ENCODE measurements at regions of chr9 and their contacts with region 1.

Region 1: GRCh38 chr9:31958572-31958971 is 425.9 kb upstream of the ACO1 start:
- DNase-seq: no peak
- ATAC-seq: no peak
- H3K4me3 ChIP-seq: no peak overlapping the region
- H3K27ac ChIP-seq: no peak overlapping the region
- H3K4me1 ChIP-seq: no peaks in the 10 kb centered on the region
- H3K27me3 ChIP-seq: no peaks in the 10 kb centered on the region
- CTCF ChIP-seq: no peak
- POLR2A ChIP-seq: no peak
- RAD21 ChIP-seq: no peak

Region 2: GRCh38 chr9:30519756-30520155 is 1438.8 kb before region 1 on chr9:
- CTCF ChIA-PET with region 1: no interaction called
- POLR2A ChIA-PET with region 1: no interaction called
- dilution Hi-C with region 1: no loop called
- in situ Hi-C with region 1: no loop called
- intact Hi-C with region 1: no loop called
- DNase-seq: no peak
- ATAC-seq: no peak
- H3K4me3 ChIP-seq: no peak overlapping the region
- H3K27ac ChIP-seq: no peak overlapping the region
- H3K4me1 ChIP-seq: no peaks in the 10 kb centered on the region
- H3K27me3 ChIP-seq: no peaks in the 10 kb centered on the region
- CTCF ChIP-seq: no peak
- POLR2A ChIP-seq: no peak
- RAD21 ChIP-seq: no peak

Region 3: DNA sequence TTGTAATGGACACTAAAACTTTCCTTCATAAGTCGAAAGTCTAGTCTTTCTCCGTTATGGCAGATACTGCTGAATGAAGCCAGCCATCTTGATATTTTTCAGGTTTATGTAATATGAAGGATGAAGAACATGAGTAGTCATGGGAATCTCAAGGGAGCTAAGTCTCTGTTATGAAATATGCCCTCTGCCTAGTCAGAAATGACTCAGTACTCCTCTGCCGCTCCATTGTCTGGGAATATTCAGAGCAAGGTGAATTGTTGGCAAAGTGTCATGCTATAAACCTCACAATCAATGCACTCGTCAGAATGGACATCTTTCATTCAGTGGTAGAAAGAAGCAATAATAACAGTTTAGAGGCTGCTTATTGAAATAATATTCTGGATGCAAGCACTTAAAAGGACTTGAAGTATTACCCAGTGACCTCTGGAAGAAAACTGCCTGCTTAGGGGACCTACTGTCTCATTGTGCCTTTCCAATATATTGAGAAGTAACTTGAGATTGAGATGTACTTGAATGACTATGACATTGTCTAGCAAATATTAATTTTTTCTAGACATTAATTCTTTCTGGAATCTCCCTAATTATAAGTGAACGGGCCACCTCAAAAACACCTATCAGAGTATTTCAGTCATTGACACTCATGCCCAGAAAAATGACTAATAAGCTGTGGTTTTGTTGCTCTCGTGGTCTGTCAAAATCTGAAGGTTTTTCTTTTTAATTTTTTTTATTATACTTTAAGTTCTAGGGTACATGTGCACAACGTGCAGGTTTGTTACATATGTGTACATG is 585.6 kb before region 1 on chr9:
- CTCF ChIA-PET with region 1: no interaction called
- POLR2A ChIA-PET with region 1: no interaction called
- dilution Hi-C with region 1: no loop called
- in situ Hi-C with region 1: no loop called
- intact Hi-C with region 1: no loop called
- DNase-seq: no peak
- ATAC-seq: no peak
- H3K4me3 ChIP-seq: no peak overlapping the region
- H3K27ac ChIP-seq: no peak overlapping the region
- H3K4me1 ChIP-seq: no peaks in the 10 kb centered on the region
- H3K27me3 ChIP-seq: no peaks in the 10 kb centered on the region
- CTCF ChIP-seq: no peak
- POLR2A ChIP-seq: no peak
- RAD21 ChIP-seq: no peak

Region 4: GRCh38 chr9:31916591-31917241 is 41.9 kb before region 1 on chr9:
- CTCF ChIA-PET with region 1: no interaction called
- POLR2A ChIA-PET with region 1: no interaction called
- dilution Hi-C with region 1: no loop called
- in situ Hi-C with region 1: no loop called
- intact Hi-C with region 1: loop called (anchors 1 kb)
- DNase-seq: no peak
- ATAC-seq: no peak
- H3K4me3 ChIP-seq: no peak overlapping the region
- H3K27ac ChIP-seq: no peak overlapping the region
- H3K4me1 ChIP-seq: no peaks in the 10 kb centered on the region
- H3K27me3 ChIP-seq: no peaks in the 10 kb centered on the region
- CTCF ChIP-seq: no peak
- POLR2A ChIP-seq: no peak
- RAD21 ChIP-seq: no peak

Region 5: GRCh38 chr9:32045513-32045912 is 86.9 kb after region 1 on chr9:
- CTCF ChIA-PET with region 1: no interaction called
- POLR2A ChIA-PET with region 1: no interaction called
- dilution Hi-C with region 1: no loop called
- in situ Hi-C with region 1: no loop called
- intact Hi-C with region 1: no loop called
- DNase-seq: no peak
- ATAC-seq: no peak
- H3K4me3 ChIP-seq: no peak overlapping the region
- H3K27ac ChIP-seq: no peak overlapping the region
- H3K4me1 ChIP-seq: no peaks in the 10 kb centered on the region
- H3K27me3 ChIP-seq: no peaks in the 10 kb centered on the region
- CTCF ChIP-seq: no peak
- POLR2A ChIP-seq: no peak
- RAD21 ChIP-seq: no peak